ENCODE measurements at regions of chr1 and their contacts with region 1.

Region 1: DNA sequence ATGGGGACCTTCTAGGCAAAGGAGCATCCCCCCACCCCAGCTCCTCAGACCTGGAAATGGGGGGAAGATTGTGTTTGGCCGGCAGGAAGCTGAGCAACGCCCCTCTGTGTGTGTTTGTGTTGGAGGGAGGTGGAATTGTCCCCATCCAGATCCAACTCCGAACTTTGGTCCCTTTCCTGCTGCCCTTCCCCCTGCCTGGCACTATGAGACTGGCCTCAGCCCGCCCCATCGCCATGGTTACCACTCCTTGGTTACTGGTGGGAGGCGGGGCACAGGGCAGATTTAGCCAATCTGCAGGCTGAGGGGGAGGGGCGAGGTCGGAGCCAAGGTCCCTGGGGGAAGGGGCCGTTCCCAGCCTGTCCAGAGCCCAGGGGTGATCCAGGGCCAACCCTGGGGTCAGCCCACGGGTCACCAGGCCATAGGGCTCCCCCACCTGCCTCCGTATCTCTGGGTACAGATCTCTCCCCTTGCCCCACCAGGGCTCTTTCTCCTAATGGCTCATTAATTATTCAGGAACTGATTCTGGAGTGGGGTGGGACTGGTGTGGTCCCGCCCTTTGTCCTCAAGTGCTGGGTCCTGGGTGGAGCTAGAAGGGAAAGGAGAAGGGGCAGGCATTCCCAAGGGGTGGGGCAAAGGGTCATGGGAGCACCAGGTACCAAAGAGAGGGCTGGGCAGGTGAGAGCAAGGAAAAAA is 15.2 kb downstream of the PTPRF start:
- DNase-seq: peak in 1 of 2 experiments; percentile 97
- H3K4me3 ChIP-seq: peak overlapping the region in 3 of 4 experiments; percentile 16 to 53 (median 30); a peak in 5 of 8 replicates
- H3K27ac ChIP-seq: peak overlapping the region; percentile 80
- H3K4me1 ChIP-seq: peaks cover 8 to 54% (median 43%) of the 10 kb centered on the region in 4 experiments
- H3K27me3 ChIP-seq: no peaks in the 10 kb centered on the region
- CTCF ChIP-seq: no peak
- EP300 ChIP-seq: peak; percentile 67 to 76; a peak in 2 of 3 replicates
- POLR2A ChIP-seq: no peak
- RAD21 ChIP-seq: no peak

Region 2: GRCh38 chr1:43559714-43560113 is 13.9 kb after region 1 on chr1:
- CTCF ChIA-PET with region 1: interaction called, 16 read pairs
- POLR2A ChIA-PET with region 1: interaction called, 14 read pairs
- DNase-seq: no peak
- H3K4me3 ChIP-seq: no peak overlapping the region
- H3K27ac ChIP-seq: peak overlapping the region; percentile 2
- H3K4me1 ChIP-seq: peaks cover 0 to 35% (median 25%) of the 10 kb centered on the region in 4 experiments; a peak in 6 of 7 replicates
- H3K27me3 ChIP-seq: no peaks in the 10 kb centered on the region
- CTCF ChIP-seq: no peak
- EP300 ChIP-seq: no peak
- POLR2A ChIP-seq: no peak
- RAD21 ChIP-seq: no peak

Region 3: GRCh38 chr1:43565600-43566360 is 19.9 kb after region 1 on chr1:
- CTCF ChIA-PET with region 1: interaction called, 68 read pairs
- POLR2A ChIA-PET with region 1: interaction called, 15 read pairs
- DNase-seq: peak in 1 of 2 experiments; percentile 88
- H3K4me3 ChIP-seq: peak overlapping the region in 3 of 4 experiments; percentile 18 to 50 (median 32); a peak in 6 of 8 replicates
- H3K27ac ChIP-seq: no peak overlapping the region; the same call in 1 of the 2 replicates
- H3K4me1 ChIP-seq: peaks cover 0 to 25% (median 20%) of the 10 kb centered on the region in 4 experiments; a peak in 6 of 7 replicates
- H3K27me3 ChIP-seq: no peaks in the 10 kb centered on the region
- CTCF ChIP-seq: no peak
- EP300 ChIP-seq: no peak
- POLR2A ChIP-seq: no peak
- RAD21 ChIP-seq: no peak

Measured in H1 (cell line).